Endothelial cell of umbilical vein (primary cell): ENCODE measurements at regions of chr14 and their contacts with region 1.

Region 1: DNA sequence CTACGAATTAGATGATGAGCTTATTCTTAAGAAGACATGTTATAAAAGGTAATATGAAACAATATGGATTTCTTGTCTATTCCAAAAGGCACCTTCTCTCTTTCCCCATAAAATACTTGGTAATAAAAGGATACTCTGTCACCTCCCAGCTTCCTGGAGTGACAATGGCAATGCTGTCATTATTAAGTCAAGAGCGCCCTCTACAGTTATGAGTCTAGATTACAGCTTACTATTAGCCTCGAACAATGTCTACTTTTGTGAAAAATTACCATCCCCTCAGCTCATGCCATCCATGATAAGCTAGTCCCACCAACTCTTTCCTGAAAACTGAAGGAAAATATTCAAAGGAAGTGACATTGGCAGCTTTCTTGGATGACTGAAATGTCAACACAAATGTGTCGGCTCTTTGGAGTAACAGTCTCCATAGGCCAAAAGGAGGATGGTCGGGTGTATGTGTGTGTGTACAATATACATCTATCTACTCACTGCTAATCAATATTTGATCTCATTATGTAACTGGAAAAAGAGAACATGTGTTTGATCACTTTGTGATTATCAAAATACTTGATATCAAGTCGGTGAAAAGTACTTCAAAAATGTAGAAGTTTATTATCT is 48.7 kb upstream of the CDKN3 start:
- DNase-seq: peak; percentile 63
- H3K4me3 ChIP-seq: no peak overlapping the region
- H3K27ac ChIP-seq: no peak overlapping the region
- H3K4me1 ChIP-seq: peaks cover 12% of the 10 kb centered on the region
- H3K27me3 ChIP-seq: no peaks in the 10 kb centered on the region
- CTCF ChIP-seq: peak; percentile 52 to 56
- POLR2A ChIP-seq: no peak

Region 2: GRCh38 chr14:52824507-52824906 is 1523.6 kb before region 1 on chr14:
- CTCF ChIA-PET with region 1: interaction called, 15 read pairs
- POLR2A ChIA-PET with region 1: no interaction called
- dilution Hi-C with region 1: no loop called
- intact Hi-C with region 1: no loop called
- DNase-seq: peak; percentile 17
- H3K4me3 ChIP-seq: no peak overlapping the region
- H3K27ac ChIP-seq: no peak overlapping the region
- H3K4me1 ChIP-seq: peaks cover 4% of the 10 kb centered on the region
- H3K27me3 ChIP-seq: no peaks in the 10 kb centered on the region
- CTCF ChIP-seq: no peak
- POLR2A ChIP-seq: no peak

Region 3: GRCh38 chr14:53217295-53217994 is 1130.7 kb before region 1 on chr14:
- CTCF ChIA-PET with region 1: interaction called, 3 read pairs
- POLR2A ChIA-PET with region 1: no interaction called
- dilution Hi-C with region 1: no loop called
- intact Hi-C with region 1: loop called (anchors 10 kb)
- DNase-seq: peak; percentile 79
- H3K4me3 ChIP-seq: peak overlapping the region in 2 of 3 experiments; percentile 22 to 69
- H3K27ac ChIP-seq: no peak overlapping the region
- H3K4me1 ChIP-seq: no peaks in the 10 kb centered on the region
- H3K27me3 ChIP-seq: no peaks in the 10 kb centered on the region
- CTCF ChIP-seq: peak; percentile 29 to 58
- POLR2A ChIP-seq: no peak

Region 4: GRCh38 chr14:53355581-53356112 is 992.5 kb before region 1 on chr14:
- CTCF ChIA-PET with region 1: interaction called, 11 read pairs
- POLR2A ChIA-PET with region 1: no interaction called
- dilution Hi-C with region 1: no loop called
- intact Hi-C with region 1: no loop called
- DNase-seq: peak; percentile 52
- H3K4me3 ChIP-seq: no peak overlapping the region
- H3K27ac ChIP-seq: no peak overlapping the region
- H3K4me1 ChIP-seq: peaks cover 8% of the 10 kb centered on the region
- H3K27me3 ChIP-seq: no peaks in the 10 kb centered on the region
- CTCF ChIP-seq: no peak
- POLR2A ChIP-seq: no peak

Region 5: DNA sequence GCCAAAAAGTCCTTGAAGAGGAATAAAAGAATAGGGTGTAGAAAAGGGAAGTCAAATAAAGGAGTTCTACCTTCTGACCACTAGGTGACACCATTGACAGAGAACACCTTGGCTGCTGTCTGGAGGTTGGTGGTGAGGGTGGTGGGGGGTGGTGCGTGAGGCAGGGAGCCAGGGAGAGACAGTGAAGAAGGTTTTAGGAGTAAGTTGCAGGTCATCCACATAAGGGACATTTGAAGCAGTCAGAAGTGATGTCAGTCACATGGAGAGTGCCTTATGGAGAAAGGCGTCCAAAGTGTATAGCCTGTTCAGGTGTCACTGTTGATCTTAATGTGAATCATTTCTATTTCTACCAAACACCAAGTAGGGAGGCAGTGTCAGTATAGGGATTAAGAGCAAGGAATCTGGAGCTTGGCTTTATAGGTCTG is 915.7 kb before region 1 on chr14:
- CTCF ChIA-PET with region 1: interaction called, 67 read pairs
- POLR2A ChIA-PET with region 1: no interaction called
- dilution Hi-C with region 1: no loop called
- intact Hi-C with region 1: loop called (anchors 1 kb)
- DNase-seq: peak; percentile 70
- H3K4me3 ChIP-seq: no peak overlapping the region
- H3K27ac ChIP-seq: no peak overlapping the region
- H3K4me1 ChIP-seq: no peaks in the 10 kb centered on the region
- H3K27me3 ChIP-seq: peaks cover 6 to 14% of the 10 kb centered on the region in 2 experiments
- CTCF ChIP-seq: peak; percentile 64 to 68
- POLR2A ChIP-seq: no peak

Region 6: DNA sequence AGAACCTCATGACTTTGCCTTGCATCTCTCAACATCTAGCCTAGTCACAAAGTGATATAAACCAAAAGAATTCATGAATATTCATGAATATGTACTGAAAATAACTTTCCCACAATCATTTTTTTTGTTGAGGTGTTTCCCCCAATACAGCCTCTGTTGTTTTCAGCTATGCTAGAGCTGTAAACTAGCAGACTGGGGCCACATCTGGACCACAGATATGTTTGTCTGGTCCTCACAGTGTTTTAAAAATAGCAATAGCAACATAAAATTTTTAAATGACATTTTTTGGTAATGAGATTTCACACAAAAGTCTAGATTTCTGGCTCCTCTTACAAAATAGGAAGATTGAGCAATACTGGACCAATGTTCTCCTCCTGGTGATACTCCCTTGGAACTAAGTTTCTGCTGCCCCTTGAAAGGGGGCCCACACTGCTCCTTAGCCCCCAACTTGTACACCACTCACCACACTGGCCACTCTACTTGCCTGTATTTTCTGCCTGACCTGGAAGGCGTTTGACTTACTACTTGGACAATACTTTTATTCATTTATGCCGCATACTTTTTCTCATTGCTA is 472.7 kb before region 1 on chr14:
- CTCF ChIA-PET with region 1: no interaction called
- POLR2A ChIA-PET with region 1: no interaction called
- dilution Hi-C with region 1: no loop called
- intact Hi-C with region 1: no loop called
- DNase-seq: no peak
- H3K4me3 ChIP-seq: no peak overlapping the region
- H3K27ac ChIP-seq: no peak overlapping the region
- H3K4me1 ChIP-seq: peaks cover 25% of the 10 kb centered on the region
- H3K27me3 ChIP-seq: no peaks in the 10 kb centered on the region
- CTCF ChIP-seq: no peak
- POLR2A ChIP-seq: no peak

Region 7: DNA sequence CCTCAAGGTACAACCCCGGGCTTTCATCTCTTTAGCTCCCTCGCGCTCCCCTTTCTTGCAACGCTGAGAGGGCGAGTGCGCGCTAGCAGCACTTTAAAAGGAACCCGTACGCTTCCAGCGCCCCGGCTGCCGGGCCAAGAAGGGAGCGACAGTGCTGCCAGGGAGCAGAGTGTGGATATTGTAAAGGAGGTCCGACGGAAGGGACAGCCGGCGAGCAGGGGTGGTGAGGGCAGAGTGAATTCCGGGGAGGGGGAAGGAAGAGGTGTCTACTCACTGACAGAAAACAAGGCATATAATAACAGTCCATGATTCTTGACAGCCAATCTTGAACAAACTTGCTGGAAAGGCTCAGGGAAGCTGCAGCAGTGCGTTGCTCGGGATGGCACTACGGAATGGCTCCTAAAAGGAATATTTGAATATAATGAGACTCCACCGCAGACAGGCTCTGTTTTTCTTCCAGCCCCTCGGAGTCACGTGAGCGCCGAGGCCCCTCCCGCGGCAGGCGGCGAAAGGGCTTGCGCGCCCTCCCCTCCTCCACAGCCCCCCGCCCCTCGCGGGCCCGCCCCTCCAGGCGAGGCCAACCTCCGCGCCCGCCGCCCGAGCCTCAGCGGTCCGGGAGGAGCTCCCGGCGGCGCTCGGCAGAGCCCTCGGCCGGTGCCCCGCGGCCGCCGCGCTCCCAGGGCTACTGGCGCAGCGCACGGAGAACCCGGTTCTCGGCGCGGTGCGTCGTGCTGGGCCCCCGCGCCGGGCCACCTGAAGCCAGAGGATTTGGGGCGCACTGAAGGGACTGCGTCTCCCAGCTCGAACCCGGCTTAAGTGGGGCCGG is 394.9 kb before region 1 on chr14:
- CTCF ChIA-PET with region 1: interaction called, 51 read pairs
- POLR2A ChIA-PET with region 1: interaction called, 4 read pairs
- dilution Hi-C with region 1: no loop called
- intact Hi-C with region 1: no loop called
- DNase-seq: peak; percentile 94
- H3K4me3 ChIP-seq: peak overlapping the region; percentile 77 to 99 (median 86)
- H3K27ac ChIP-seq: peak overlapping the region; percentile 73
- H3K4me1 ChIP-seq: peaks cover 35% of the 10 kb centered on the region
- H3K27me3 ChIP-seq: no peaks in the 10 kb centered on the region
- CTCF ChIP-seq: no peak
- POLR2A ChIP-seq: peak; percentile 99

Region 8: GRCh38 chr14:54366736-54367735 is 18.9 kb after region 1 on chr14:
- CTCF ChIA-PET with region 1: interaction called, 16 read pairs
- POLR2A ChIA-PET with region 1: no interaction called
- dilution Hi-C with region 1: no loop called
- intact Hi-C with region 1: no loop called
- DNase-seq: peak; percentile 69
- H3K4me3 ChIP-seq: no peak overlapping the region
- H3K27ac ChIP-seq: no peak overlapping the region
- H3K4me1 ChIP-seq: peaks cover 38% of the 10 kb centered on the region
- H3K27me3 ChIP-seq: peaks cover 0 to 1% of the 10 kb centered on the region in 2 experiments
- CTCF ChIP-seq: peak; percentile 59 to 67
- POLR2A ChIP-seq: no peak

Region 9: DNA sequence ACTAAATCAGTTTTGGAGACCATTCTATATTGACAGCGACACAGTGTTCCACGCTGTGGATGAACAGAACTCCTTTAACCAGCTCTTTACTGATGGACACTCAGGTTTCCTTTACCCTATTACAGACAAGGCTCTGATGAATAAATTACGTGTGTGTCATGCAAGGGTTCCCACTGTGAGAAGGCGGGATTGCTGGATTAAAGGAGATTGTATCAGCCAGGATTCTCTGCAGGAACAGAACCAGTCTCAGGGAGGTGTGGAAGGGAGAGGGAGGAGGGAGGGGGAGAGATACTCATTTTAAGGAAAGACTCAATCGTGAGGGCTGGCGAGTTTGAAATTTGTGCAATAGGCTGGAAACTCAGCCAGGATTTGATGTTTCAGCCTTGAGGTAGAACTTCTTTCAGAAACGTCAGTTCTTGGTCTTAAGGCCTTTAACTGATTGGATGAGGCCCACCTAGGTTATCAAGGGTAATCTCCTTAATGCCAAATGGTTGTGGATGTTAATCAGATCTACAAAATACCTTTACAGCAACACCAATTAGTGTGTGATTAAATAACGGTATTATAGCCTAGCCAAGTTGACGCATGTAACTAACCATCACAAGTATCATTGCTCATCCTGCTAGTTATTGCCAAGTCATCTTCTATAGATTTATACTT is 450.5 kb after region 1 on chr14:
- CTCF ChIA-PET with region 1: no interaction called
- POLR2A ChIA-PET with region 1: no interaction called
- dilution Hi-C with region 1: no loop called
- intact Hi-C with region 1: no loop called
- DNase-seq: no peak
- H3K4me3 ChIP-seq: no peak overlapping the region
- H3K27ac ChIP-seq: no peak overlapping the region
- H3K4me1 ChIP-seq: peaks cover 13% of the 10 kb centered on the region
- H3K27me3 ChIP-seq: peaks cover 0 to 2% of the 10 kb centered on the region in 2 experiments
- CTCF ChIP-seq: no peak
- POLR2A ChIP-seq: no peak